Right ventricle myocardium inferior (tissue), 1 donor: ENCODE measurements at regions of chr6 and their contacts with region 1.

Region 1: DNA sequence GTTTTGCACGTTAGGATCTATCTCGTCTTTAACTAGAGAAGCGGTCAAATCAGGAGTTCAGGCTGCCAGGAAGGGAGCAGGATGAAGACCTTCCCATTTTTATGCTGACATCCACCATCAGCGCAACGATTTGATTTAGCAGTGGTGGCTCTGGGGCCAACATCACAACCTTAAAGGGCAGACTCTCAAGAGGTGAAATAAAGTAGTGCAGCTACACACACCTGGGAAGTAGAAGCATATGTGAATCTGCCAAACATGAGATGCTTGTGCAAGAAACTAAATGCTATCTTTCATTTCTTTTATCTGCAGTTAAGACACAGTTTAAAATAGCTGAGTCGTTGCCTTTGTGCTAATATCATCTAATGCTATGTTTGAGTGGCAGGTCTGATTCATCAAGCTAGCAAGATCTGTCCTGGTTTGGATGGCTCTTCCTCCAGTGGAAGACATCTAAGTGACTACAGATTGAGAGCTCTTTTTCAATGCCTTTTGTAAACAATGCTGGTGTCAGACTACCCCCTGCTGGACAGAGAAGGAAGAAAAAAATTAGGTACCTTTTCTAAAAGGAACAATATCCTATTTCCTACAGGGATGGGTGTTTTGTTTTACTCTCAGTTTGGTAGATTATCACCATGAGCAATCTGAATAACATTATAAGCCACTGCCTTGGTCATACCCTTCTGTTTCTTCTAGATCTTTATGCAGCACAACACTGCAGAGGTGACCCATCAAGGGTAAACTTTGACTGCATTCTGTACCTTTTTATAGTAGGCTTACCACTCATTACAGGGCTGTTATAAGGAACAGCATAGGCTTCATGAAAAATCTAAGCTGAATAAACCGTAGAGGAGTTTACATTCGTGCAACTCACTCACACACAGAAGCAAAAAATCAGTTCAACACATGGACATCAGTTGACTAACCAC is 171.6 kb upstream of the FBXL4 start:
- DNase-seq: no peak
- ATAC-seq: peak; percentile 34

Region 2: GRCh38 chr6:98845211-98846020 is 274.0 kb before region 1 on chr6:
- intact Hi-C with region 1: loop called (anchors 10 kb)
- DNase-seq: peak; percentile 80
- ATAC-seq: peak; percentile 56